ENCODE measurements at regions of chr1 and their contacts with region 1.

Region 1: DNA sequence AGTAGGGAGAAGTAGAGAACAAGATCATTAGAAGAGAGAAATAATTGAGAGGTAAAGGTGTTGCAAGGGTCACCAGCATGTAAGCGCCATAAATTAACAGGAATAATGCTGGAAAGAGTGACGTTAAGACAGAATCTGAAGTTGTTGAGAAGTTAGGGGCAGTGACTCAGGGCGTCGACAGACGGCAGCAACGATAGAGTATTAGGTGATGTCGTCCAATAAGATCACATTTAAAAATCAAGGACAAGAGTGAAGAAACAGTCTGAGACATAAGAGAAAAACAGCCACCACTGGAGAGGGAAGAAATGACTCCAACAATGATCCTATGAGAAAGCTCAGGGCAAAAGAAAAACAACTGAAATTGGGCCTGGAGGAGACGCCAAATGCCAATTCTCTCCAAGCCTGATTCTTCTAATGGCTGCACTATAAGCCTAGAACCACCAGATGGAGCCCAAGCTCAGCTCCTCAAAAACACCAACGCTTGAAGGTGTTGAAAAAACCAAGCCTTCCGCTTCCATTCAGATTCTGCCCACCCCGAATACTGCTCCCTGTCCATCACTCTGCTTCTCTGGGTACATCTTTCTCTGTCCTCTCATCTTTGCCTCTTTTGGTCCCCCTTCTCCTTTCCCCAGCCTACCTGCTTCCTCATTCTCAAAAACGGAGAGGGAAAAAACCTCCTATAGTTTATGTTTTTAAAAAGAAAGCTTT is 70.0 kb downstream of the LUZP1 start:
- DNase-seq: peak in 1 of 2 donors; percentile 65
- ATAC-seq: peak; percentile 57 to 81 (median 68)
- H3K4me3 ChIP-seq: no peak overlapping the region
- H3K27ac ChIP-seq: peak overlapping the region in 1 of 10 donors; percentile 79
- H3K4me1 ChIP-seq: peaks cover 27 to 56% (median 54%) of the 10 kb centered on the region in 9 donors
- H3K27me3 ChIP-seq: no peaks in the 10 kb centered on the region
- CTCF ChIP-seq: peak; percentile 88 to 98 (median 94)

Region 2: GRCh38 chr1:22976461-22977243 is 122.0 kb before region 1 on chr1:
- intact Hi-C with region 1: loop called in 3 of 10 experiments (anchors 2 to 10 kb)
- DNase-seq: peak; percentile 21 to 50
- ATAC-seq: peak; percentile 89 to 95 (median 92)
- H3K4me3 ChIP-seq: no peak overlapping the region
- H3K27ac ChIP-seq: no peak overlapping the region
- H3K4me1 ChIP-seq: peaks cover 0 to 10% (median 0%) of the 10 kb centered on the region in 9 donors
- H3K27me3 ChIP-seq: peaks cover 0 to 36% (median 7%) of the 10 kb centered on the region in 7 donors
- CTCF ChIP-seq: peak; percentile 30 to 70 (median 65)

Region 3: GRCh38 chr1:23177438-23178380 is 79.1 kb after region 1 on chr1:
- intact Hi-C with region 1: loop called in 1 of 10 experiments (anchors 2 kb)
- DNase-seq: peak; percentile 89 to 91
- ATAC-seq: peak; percentile 92 to 98 (median 96)
- H3K4me3 ChIP-seq: peak overlapping the region; percentile 29 to 73 (median 61)
- H3K27ac ChIP-seq: peak overlapping the region; percentile 86 to 98 (median 92)
- H3K4me1 ChIP-seq: peaks cover 0 to 38% (median 24%) of the 10 kb centered on the region in 9 donors
- H3K27me3 ChIP-seq: peaks cover 0 to 8% (median 0%) of the 10 kb centered on the region in 7 donors
- CTCF ChIP-seq: peak in 5 of 9 donors; percentile 7 to 47 (median 38)

Region 4: GRCh38 chr1:23184212-23184934 is 85.8 kb after region 1 on chr1:
- intact Hi-C with region 1: loop called (anchors 1 to 2 kb)
- DNase-seq: peak; percentile 15 to 46
- ATAC-seq: peak in 6 of 8 donors; percentile 38 to 74 (median 58)
- H3K4me3 ChIP-seq: peak overlapping the region in 8 of 10 donors; percentile 26 to 55 (median 39)
- H3K27ac ChIP-seq: no peak overlapping the region
- H3K4me1 ChIP-seq: peaks cover 0 to 10% (median 6%) of the 10 kb centered on the region in 9 donors
- H3K27me3 ChIP-seq: no peaks in the 10 kb centered on the region
- CTCF ChIP-seq: peak; percentile 76 to 93 (median 83)

Region 5: DNA sequence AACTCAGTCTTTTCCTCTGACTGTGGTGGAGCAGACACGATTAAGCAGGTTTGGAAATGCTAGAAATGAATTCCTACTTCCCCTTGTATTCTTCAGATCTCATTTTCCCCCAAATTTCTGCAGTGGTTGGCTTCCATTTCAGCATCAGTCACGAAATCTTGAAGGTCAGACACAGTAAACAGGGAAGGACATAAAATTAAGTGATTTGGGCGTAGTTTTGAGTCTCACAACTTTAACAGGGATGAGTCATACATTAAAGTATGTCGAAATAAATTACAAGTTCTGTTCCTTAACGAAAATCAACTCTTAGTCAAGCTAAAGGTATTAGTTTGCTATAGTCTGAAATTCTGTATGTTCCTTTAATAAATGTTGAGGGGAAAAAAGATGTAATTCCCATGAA is 184.3 kb after region 1 on chr1:
- intact Hi-C with region 1: loop called in 6 of 10 experiments (anchors 10 kb)
- DNase-seq: no peak
- ATAC-seq: no peak
- H3K4me3 ChIP-seq: no peak overlapping the region
- H3K27ac ChIP-seq: no peak overlapping the region
- H3K4me1 ChIP-seq: peaks cover 0 to 13% (median 0%) of the 10 kb centered on the region in 9 donors
- H3K27me3 ChIP-seq: no peaks in the 10 kb centered on the region
- CTCF ChIP-seq: no peak

Measured in heart right ventricle (tissue), 16 donors.